Activated T-helper 2 cell treated with anti-CD3 and anti-CD28 coated beads, Interferon-gamma antibody, Interleukin-2, Interleukin-4, amounts not matched to agents 10 μg/mL and 5 μg/mL and 100 μg/mL, durations not matched to agents 14 hours and 24 hours and 36 hours (primary cell): ENCODE measurements at regions of chr13 and their contacts with region 1.

Region 1: DNA sequence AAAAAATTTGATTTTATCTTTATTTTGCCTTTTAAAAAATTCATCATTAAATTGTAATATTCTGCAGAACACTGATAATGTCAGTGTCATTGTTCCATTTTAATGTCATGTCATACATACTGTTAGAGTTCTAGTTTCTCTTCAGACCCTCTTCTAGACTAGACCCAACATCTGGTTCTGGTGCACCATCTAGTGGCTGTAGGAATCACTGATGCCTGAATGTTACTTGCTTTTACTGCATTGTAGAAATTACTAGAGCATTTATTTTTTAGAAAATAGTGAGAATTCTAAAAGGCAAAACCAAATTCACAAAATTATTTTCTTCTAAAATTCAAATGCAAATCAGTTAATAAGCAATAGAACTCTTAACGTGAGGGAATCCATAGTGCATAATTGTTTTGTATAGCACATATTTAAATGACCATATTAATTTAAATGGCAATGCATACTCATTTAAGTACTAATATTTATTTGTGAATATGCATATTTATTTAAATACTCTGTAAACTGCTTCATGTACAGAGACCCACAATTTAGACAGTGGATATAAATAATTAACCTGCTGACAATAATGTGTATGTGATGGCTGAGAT is 425.7 kb downstream of the KLF12 start:
- DNase-seq: peak; percentile 33
- H3K4me3 Mint-ChIP-seq: no peak overlapping the region
- H3K27ac Mint-ChIP-seq: no peak overlapping the region
- H3K4me1 Mint-ChIP-seq: peaks cover 16% of the 10 kb centered on the region
- H3K27me3 Mint-ChIP-seq: no peaks in the 10 kb centered on the region

Region 2: GRCh38 chr13:72808917-72809500 is 899.5 kb before region 1 on chr13:
- intact Hi-C with region 1: loop called (anchors 1 kb)
- DNase-seq: no peak
- H3K4me3 Mint-ChIP-seq: no peak overlapping the region
- H3K27ac Mint-ChIP-seq: no peak overlapping the region
- H3K4me1 Mint-ChIP-seq: no peaks in the 10 kb centered on the region
- H3K27me3 Mint-ChIP-seq: no peaks in the 10 kb centered on the region

Region 3: GRCh38 chr13:72839831-72840426 is 868.6 kb before region 1 on chr13:
- intact Hi-C with region 1: loop called (anchors 1 kb)
- DNase-seq: no peak
- H3K4me3 Mint-ChIP-seq: no peak overlapping the region
- H3K27ac Mint-ChIP-seq: no peak overlapping the region
- H3K4me1 Mint-ChIP-seq: peaks cover 1% of the 10 kb centered on the region
- H3K27me3 Mint-ChIP-seq: no peaks in the 10 kb centered on the region